ENCODE measurements at regions of chr16 and their contacts with region 1.

Region 1: GRCh38 chr16:24010440-24011089 is 174.8 kb downstream of the PRKCB start:
- DNase-seq: peak; percentile 61
- H3K4me3 Mint-ChIP-seq: no peak overlapping the region
- H3K27ac Mint-ChIP-seq: no peak overlapping the region
- H3K4me1 Mint-ChIP-seq: peaks cover 27% of the 10 kb centered on the region
- H3K27me3 Mint-ChIP-seq: no peaks in the 10 kb centered on the region

Region 2: GRCh38 chr16:23784811-23785447 is 225.6 kb before region 1 on chr16:
- intact Hi-C with region 1: no loop called
- DNase-seq: no peak
- H3K4me3 Mint-ChIP-seq: no peak overlapping the region
- H3K27ac Mint-ChIP-seq: no peak overlapping the region
- H3K4me1 Mint-ChIP-seq: no peaks in the 10 kb centered on the region
- H3K27me3 Mint-ChIP-seq: peaks cover 16% of the 10 kb centered on the region

Region 3: GRCh38 chr16:23952128-23952970 is 58.2 kb before region 1 on chr16:
- intact Hi-C with region 1: loop called (anchors 5 kb)
- DNase-seq: no peak
- H3K4me3 Mint-ChIP-seq: no peak overlapping the region
- H3K27ac Mint-ChIP-seq: peak overlapping the region; percentile 43
- H3K4me1 Mint-ChIP-seq: peaks cover 64% of the 10 kb centered on the region
- H3K27me3 Mint-ChIP-seq: no peaks in the 10 kb centered on the region

Region 4: DNA sequence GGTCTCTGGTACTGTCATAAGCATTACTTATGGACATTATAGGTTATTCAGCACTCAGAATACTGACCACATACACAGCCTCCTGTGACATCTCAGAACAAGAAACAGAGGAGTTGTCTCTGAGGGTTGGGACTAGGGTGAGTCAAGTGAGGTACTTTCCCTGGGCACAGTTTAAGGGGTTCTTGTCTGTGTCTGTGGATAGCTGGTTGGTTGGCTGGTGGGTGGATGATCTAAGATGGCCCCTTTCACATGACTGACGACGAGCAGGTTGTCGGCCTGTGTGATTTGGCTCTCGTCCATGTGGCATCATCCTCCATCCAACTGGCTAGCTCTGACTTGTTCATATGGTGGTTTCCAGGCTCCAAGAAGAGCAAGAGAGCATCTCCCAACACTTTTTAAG is 10.9 kb before region 1 on chr16:
- intact Hi-C with region 1: no loop called
- DNase-seq: no peak
- H3K4me3 Mint-ChIP-seq: no peak overlapping the region
- H3K27ac Mint-ChIP-seq: peak overlapping the region; percentile 69
- H3K4me1 Mint-ChIP-seq: peaks cover 17% of the 10 kb centered on the region
- H3K27me3 Mint-ChIP-seq: no peaks in the 10 kb centered on the region

Region 5: GRCh38 chr16:24069036-24069590 is 58.5 kb after region 1 on chr16:
- intact Hi-C with region 1: no loop called
- DNase-seq: no peak
- H3K4me3 Mint-ChIP-seq: no peak overlapping the region
- H3K27ac Mint-ChIP-seq: no peak overlapping the region
- H3K4me1 Mint-ChIP-seq: peaks cover 14% of the 10 kb centered on the region
- H3K27me3 Mint-ChIP-seq: no peaks in the 10 kb centered on the region

Measured in activated T-helper 2 cell treated with anti-CD3 and anti-CD28 coated beads, Interferon-gamma antibody, Interleukin-2, Interleukin-4, amounts not matched to agents 10 μg/mL and 5 μg/mL and 100 μg/mL, durations not matched to agents 14 hours and 24 hours and 36 hours (primary cell).